Body of pancreas (tissue), 4 donors: ENCODE measurements at regions of chr2 and their contacts with region 1.

Region 1: GRCh38 chr2:950080-950966 is at the start of gene SNTG2:
- DNase-seq: peak; percentile 42 to 76 (median 60)
- ATAC-seq: peak; percentile 82
- H3K4me3 ChIP-seq: peak within 1 kb of the TSS; percentile 49 to 90
- H3K27ac ChIP-seq: peak within 1 kb of the TSS in 1 of 4 donors; percentile 59
- H3K4me1 ChIP-seq: peaks cover 23% of the 10 kb centered on the region
- H3K27me3 ChIP-seq: peaks cover 0 to 4% of the 10 kb centered on the region in 2 donors
- CTCF ChIP-seq: peak in 1 of 7 experiments; percentile 9
- POLR2A ChIP-seq: peak in 1 of 3 donors; percentile 30
- total RNA-seq, gene SNTG2: 11.9 to 18.7 TPM

Region 2: GRCh38 chr2:1136057-1136456 is 185.7 kb after region 1 on chr2:
- intact Hi-C with region 1: loop called (anchors 10 kb)
- DNase-seq: peak in 1 of 4 donors; percentile 43
- ATAC-seq: peak; percentile 42
- H3K4me3 ChIP-seq: no peak overlapping the region
- H3K27ac ChIP-seq: no peak overlapping the region
- H3K4me1 ChIP-seq: peaks cover 3% of the 10 kb centered on the region
- H3K27me3 ChIP-seq: no peaks in the 10 kb centered on the region
- CTCF ChIP-seq: peak; percentile 15 to 75 (median 54)
- POLR2A ChIP-seq: no peak